Naive thymus-derived CD4-positive, alpha-beta T cell (primary cell): ENCODE measurements at regions of chr6 and their contacts with region 1.

Region 1: GRCh38 chr6:84227434-84228197 is at the start of gene CEP162:
- DNase-seq: peak; percentile 81 to 92 (median 91)
- ATAC-seq: peak; percentile 93
- H3K4me3 ChIP-seq: peak within 1 kb of the TSS; percentile 90
- H3K4me3 Mint-ChIP-seq: peak within 1 kb of the TSS; percentile 89 to 100 (median 96)
- H3K27ac ChIP-seq: peak within 1 kb of the TSS; percentile 76
- H3K27ac Mint-ChIP-seq: peak within 1 kb of the TSS; percentile 77 to 96 (median 90)
- H3K4me1 ChIP-seq: peaks cover 0 to 8% of the 10 kb centered on the region in 2 donors
- H3K4me1 Mint-ChIP-seq: peaks cover 5 to 40% (median 23%) of the 10 kb centered on the region in 7 donors
- H3K27me3 ChIP-seq: no peaks in the 10 kb centered on the region
- H3K27me3 Mint-ChIP-seq: peaks cover 2 to 17% (median 13%) of the 10 kb centered on the region in 5 donors
- total RNA-seq, gene CEP162: 4.4 to 10.7 (median 9.2) TPM

Region 2: DNA sequence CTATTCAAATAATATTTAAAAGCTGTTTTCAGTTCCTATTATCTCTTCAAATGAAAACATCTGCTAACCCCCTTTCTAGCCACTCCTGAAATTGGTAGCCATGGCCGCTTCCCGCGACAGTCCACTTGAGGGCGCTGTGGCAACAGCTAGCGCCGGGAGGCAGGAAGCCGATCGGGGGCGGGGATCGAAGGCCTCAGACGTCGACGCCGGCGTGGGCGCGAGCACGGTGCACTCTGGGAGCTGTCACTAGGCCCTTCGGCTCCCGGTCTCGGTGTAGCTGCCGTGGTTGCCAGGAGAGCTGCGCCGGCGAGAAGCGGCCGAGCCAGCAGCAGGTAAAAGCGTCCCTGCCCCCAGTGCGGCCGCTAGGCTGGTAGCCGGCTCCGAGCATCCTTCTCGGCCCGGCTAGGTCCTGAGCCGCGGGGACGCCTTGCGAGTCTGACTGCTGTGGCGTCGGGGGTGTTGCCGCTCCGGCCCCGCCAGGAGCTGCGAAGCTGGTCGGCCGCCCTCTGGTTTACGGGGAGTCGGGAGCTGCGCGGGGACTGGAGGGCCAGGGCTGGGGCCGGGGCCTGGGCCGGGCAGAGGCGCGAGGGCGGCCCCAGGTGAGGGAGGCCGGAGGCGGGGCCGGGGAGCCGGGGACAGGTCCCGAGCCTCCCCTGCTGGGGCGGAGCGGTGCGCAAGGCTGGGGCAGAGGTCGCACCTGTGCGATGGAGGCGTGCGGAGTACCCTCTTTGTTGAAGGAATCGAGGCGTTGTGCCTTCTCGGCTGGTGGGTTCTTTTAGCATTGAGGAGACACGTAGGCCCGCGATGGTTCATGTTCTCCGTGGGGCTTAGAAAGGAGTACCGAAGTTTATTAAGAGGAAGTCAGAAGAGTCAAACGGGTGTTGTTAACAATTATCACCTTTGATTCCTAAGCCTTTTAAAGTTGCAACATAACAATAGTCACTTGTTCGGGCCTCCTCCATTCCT is 1159.9 kb before region 1 on chr6 and contains the start of gene DOP1A:
- CTCF ChIA-PET with region 1: interaction called, 5 read pairs
- POLR2A ChIA-PET with region 1: interaction called, 4 read pairs
- intact Hi-C with region 1: loop called (anchors 1 to 5 kb)
- DNase-seq: peak; percentile 91 to 97 (median 95)
- ATAC-seq: peak; percentile 93
- H3K4me3 ChIP-seq: peak within 1 kb of the TSS; percentile 83
- H3K4me3 Mint-ChIP-seq: peak within 1 kb of the TSS; percentile 89 to 96 (median 94)
- H3K27ac ChIP-seq: peak within 1 kb of the TSS; percentile 93
- H3K27ac Mint-ChIP-seq: peak within 1 kb of the TSS; percentile 85 to 97 (median 94)
- H3K4me1 ChIP-seq: peaks cover 16 to 17% of the 10 kb centered on the region in 2 donors
- H3K4me1 Mint-ChIP-seq: peaks cover 21 to 70% (median 57%) of the 10 kb centered on the region in 7 donors
- H3K27me3 ChIP-seq: no peaks in the 10 kb centered on the region
- H3K27me3 Mint-ChIP-seq: no peaks in the 10 kb centered on the region
- total RNA-seq, gene DOP1A: 13.6 to 33.9 (median 25.7) TPM

Region 3: GRCh38 chr6:83221889-83222479 is 1005.6 kb before region 1 on chr6:
- CTCF ChIA-PET with region 1: no interaction called
- POLR2A ChIA-PET with region 1: no interaction called
- intact Hi-C with region 1: loop called in 1 of 2 experiments (anchors 2 kb)
- DNase-seq: peak in 3 of 9 donors; percentile 6 to 28 (median 14)
- ATAC-seq: no peak
- H3K4me3 ChIP-seq: no peak overlapping the region
- H3K4me3 Mint-ChIP-seq: no peak overlapping the region
- H3K27ac ChIP-seq: no peak overlapping the region
- H3K27ac Mint-ChIP-seq: no peak overlapping the region
- H3K4me1 ChIP-seq: no peaks in the 10 kb centered on the region
- H3K4me1 Mint-ChIP-seq: no peaks in the 10 kb centered on the region
- H3K27me3 ChIP-seq: no peaks in the 10 kb centered on the region
- H3K27me3 Mint-ChIP-seq: peaks cover 0 to 5% (median 0%) of the 10 kb centered on the region in 5 donors

Region 4: DNA sequence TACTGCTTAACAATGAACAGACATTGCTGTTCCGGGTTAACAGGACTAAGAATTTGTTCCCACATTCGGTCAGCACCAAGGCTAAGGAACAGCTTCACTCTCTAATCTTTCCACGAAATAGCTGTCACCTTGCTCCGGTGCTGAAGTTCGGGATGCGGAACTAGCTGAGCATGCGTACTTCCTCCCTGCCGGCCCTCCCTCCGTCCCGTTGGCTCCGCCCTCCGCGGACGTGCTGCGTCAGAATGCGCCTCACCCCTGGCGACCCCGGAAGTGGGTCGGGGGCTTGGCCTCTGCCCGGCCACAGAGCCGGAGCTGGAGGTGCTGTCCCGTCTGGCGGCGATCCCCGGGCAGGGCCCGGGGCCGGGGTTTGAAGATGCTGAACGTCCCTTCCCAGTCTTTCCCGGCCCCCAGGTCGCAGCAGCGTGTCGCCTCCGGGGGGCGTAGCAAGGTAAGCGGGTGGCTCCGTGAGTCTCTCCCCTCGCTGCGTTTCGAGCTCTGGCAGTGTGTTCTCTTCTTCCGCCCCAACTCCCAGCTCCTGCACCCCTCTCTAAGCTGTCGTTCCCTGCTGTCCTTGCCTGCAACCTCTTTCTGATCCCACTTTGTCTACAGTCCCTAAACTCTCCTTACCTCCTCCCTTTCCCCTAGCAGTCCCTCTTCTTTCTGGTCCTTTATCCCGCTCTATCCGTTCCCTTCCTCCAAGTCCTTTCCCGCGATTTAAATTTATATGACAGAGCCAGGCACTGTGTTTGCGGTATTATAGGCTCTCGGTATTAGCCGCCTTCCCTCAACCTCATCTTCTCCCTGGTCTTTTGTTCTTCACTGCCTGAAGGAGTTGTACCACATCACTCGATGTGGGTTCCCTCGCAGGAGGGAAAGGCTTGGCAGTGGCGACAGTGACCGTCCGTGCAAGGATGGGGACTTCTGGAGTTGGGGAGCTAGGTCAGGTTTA is 367.9 kb before region 1 on chr6 and contains the start of gene CYB5R4:
- CTCF ChIA-PET with region 1: interaction called, 4 read pairs
- POLR2A ChIA-PET with region 1: interaction called, 8 read pairs
- intact Hi-C with region 1: loop called (anchors 1 kb)
- DNase-seq: peak; percentile 88 to 95 (median 94)
- ATAC-seq: peak; percentile 98
- H3K4me3 ChIP-seq: peak within 1 kb of the TSS; percentile 92
- H3K4me3 Mint-ChIP-seq: peak within 1 kb of the TSS; percentile 87 to 100 (median 98)
- H3K27ac ChIP-seq: peak within 1 kb of the TSS; percentile 82
- H3K27ac Mint-ChIP-seq: peak within 1 kb of the TSS; percentile 85 to 96 (median 91)
- H3K4me1 ChIP-seq: peaks cover 14 to 21% of the 10 kb centered on the region in 2 donors
- H3K4me1 Mint-ChIP-seq: peaks cover 23 to 47% (median 37%) of the 10 kb centered on the region in 7 donors
- H3K27me3 ChIP-seq: no peaks in the 10 kb centered on the region
- H3K27me3 Mint-ChIP-seq: peaks cover 8 to 18% (median 16%) of the 10 kb centered on the region in 5 donors
- total RNA-seq, gene CYB5R4: 17.8 to 38.6 (median 21.0) TPM

Region 5: DNA sequence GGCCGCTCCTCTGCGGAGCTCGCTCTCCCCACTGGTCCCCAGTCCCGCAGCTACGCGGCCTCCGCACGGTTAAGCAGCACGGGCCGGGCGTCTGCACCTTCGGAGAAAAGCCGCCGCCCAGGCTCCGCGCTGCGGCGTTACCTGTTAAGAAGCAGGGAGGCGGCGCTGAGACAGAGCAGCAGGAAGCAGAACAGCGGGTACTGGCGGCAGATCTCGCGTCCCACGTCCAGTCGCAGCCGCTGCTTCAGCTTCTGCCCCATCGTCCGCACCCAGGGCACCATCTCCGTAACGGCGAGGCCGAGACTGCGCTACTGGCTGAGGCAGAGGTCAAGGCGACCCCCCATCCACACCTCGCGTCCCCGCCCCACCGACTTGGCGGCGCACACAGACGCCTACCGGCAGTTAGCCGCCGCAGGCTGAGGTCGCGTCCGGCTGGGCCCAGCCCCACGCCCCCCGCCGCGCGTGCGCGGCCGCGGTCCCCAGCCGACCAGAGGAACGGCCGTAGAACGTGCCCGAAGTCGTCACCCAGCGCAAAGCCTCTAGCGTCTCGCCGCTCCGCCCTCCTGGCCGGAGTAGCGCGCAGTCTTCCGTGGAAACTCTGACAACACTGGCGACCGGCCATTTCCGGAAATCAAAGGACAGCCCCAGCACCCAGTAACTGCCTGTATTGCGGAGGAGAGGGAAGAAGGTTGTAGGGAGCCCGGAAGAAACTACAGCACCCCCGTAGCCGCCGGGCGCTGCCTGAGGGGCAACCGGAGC is 1366.0 kb after region 1 on chr6 and contains the start of gene SNX14:
- CTCF ChIA-PET with region 1: no interaction called
- POLR2A ChIA-PET with region 1: no interaction called
- intact Hi-C with region 1: loop called in 1 of 2 experiments (anchors 1 kb)
- DNase-seq: peak; percentile 59 to 81 (median 73)
- ATAC-seq: peak; percentile 81
- H3K4me3 ChIP-seq: peak within 1 kb of the TSS; percentile 91
- H3K4me3 Mint-ChIP-seq: peak within 1 kb of the TSS; percentile 88 to 98 (median 96)
- H3K27ac ChIP-seq: peak within 1 kb of the TSS; percentile 86
- H3K27ac Mint-ChIP-seq: peak within 1 kb of the TSS; percentile 81 to 97 (median 93)
- H3K4me1 ChIP-seq: peaks cover 5 to 21% of the 10 kb centered on the region in 2 donors
- H3K4me1 Mint-ChIP-seq: peaks cover 29 to 58% (median 47%) of the 10 kb centered on the region in 7 donors
- H3K27me3 ChIP-seq: no peaks in the 10 kb centered on the region
- H3K27me3 Mint-ChIP-seq: peaks cover 0 to 9% (median 0%) of the 10 kb centered on the region in 5 donors
- total RNA-seq, gene SNX14: 37.3 to 71.8 (median 53.3) TPM